ENCODE measurements at regions of chr2 and their contacts with region 1.

Region 1: DNA sequence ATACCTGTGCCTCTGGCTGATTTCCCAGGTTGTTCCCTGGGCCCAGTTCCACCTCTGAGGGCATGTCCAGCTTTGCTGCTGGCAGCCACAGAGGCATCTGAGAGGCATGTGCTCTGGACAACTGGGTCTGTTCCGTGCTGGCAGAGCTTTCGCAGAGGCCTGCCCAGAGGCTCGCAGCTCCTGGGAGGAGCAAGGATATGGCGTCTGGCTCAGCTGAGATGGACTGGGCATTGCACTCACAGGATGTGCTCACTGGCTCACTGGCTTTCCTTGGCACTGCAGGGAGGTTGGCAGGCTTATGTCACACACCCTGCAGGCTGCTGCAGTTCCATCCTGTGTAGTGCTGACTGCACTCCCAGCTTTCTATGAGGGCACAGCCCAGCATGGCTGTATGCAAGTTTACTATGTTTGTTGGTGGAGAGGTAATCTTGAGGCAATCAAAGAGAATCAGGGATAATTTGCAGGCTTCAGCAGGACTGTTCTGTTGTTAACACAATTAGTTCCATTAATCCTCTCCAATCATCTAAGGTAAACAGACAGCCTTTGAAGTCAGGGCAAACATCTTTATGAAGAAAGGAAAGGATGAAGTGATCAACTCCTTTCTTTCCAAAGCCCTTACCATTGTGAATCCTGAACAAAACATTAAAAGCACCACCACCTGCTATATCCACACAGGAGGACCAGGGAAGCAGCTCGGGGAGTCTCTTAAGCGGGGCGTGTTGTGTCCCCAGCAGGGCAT is 172.4 kb downstream of the PRKCE start:
- DNase-seq: peak; percentile 73
- H3K4me3 ChIP-seq: no peak overlapping the region
- H3K27ac ChIP-seq: no peak overlapping the region
- H3K4me1 ChIP-seq: peaks cover 33% of the 10 kb centered on the region
- H3K27me3 ChIP-seq: no peaks in the 10 kb centered on the region
- CTCF ChIP-seq: peak in 1 of 2 donors; percentile 7

Region 2: DNA sequence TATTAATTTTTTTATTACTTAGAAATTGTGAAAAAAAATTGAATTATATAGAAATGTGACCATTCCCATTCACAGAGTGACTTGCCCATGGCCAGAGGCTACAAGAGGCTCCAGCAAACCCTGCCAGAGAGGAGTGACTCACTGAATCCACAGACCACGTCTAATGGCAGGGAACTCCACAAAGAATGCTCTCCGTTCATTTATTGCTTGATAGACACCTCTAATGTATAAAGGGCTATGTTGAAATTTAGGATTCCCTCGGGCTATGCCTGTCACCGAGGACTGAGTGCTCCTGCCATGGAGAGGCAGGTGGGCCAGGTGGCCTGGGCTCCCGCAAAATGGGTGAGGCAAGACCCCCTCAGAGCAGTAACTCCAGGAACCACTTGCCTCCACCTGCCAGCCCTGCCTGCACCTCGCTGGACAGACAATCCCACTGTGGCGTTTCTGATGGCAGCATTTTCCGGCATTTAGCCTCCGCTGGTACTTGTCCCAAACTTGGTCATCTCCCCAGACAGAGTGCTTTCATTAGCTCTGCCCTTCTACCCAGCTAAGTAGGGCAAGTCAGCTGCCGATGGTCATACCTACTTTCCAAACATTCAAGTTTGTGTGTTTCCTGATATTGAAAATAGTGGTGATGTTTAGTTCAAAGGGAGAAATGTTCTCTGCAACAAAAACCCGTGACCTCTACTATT is 27.9 kb after region 1 on chr2:
- CTCF ChIA-PET with region 1: no interaction called
- dilution Hi-C with region 1: no loop called
- in situ Hi-C with region 1: no loop called
- intact Hi-C with region 1: loop called (anchors 1 kb)
- DNase-seq: peak; percentile 88
- H3K4me3 ChIP-seq: no peak overlapping the region
- H3K27ac ChIP-seq: no peak overlapping the region
- H3K4me1 ChIP-seq: peaks cover 40% of the 10 kb centered on the region
- H3K27me3 ChIP-seq: no peaks in the 10 kb centered on the region
- CTCF ChIP-seq: no peak

Region 3: DNA sequence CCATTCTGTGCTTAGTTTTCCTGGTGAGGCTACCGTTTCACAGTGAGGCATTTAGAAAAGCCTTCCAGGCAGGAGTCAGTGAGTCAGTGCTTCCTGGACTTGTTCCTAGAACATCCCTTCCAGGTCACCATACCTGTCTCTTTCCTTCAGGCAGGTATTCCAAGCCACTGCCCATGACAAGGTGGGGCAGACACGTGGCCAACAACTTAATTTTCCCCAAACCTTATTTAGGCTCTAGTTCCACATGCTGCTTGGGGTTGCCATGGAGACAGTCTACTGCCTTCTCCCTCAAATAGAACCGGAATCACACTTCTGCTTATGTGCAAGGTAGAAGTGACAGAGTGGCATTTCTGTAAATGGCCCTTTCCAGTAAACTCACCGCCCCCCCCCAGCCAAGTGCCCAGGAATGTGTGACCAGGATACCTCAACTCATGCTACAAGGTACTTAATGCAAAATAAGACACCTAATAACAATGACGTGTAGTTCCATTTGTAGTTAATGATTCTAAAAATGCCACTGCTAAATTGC is 85.8 kb after region 1 on chr2:
- CTCF ChIA-PET with region 1: no interaction called
- dilution Hi-C with region 1: no loop called
- in situ Hi-C with region 1: no loop called
- intact Hi-C with region 1: no loop called
- DNase-seq: peak; percentile 82
- H3K4me3 ChIP-seq: no peak overlapping the region
- H3K27ac ChIP-seq: peak overlapping the region; percentile 63
- H3K4me1 ChIP-seq: peaks cover 31% of the 10 kb centered on the region
- H3K27me3 ChIP-seq: no peaks in the 10 kb centered on the region
- CTCF ChIP-seq: no peak

Region 4: GRCh38 chr2:46200220-46200621 is 376.3 kb after region 1 on chr2:
- CTCF ChIA-PET with region 1: no interaction called
- dilution Hi-C with region 1: no loop called
- in situ Hi-C with region 1: no loop called
- intact Hi-C with region 1: no loop called
- DNase-seq: no peak
- H3K4me3 ChIP-seq: no peak overlapping the region
- H3K27ac ChIP-seq: no peak overlapping the region
- H3K4me1 ChIP-seq: peaks cover 17% of the 10 kb centered on the region
- H3K27me3 ChIP-seq: no peaks in the 10 kb centered on the region
- CTCF ChIP-seq: no peak

Measured in mammary epithelial cell (primary cell).